H1 (cell line): ENCODE measurements at regions of chr17 and their contacts with region 1.

Region 1: GRCh38 chr17:76397687-76398487 is 13.5 kb downstream of the SPHK1 start:
- DNase-seq: peak; percentile 81 to 98
- H3K4me3 ChIP-seq: no peak overlapping the region
- H3K27ac ChIP-seq: 0 out of 2 replicates have a peak overlapping the region, but pooled peaks have one; percentile 17
- H3K4me1 ChIP-seq: no peaks in the 10 kb centered on the region
- H3K27me3 ChIP-seq: no peaks in the 10 kb centered on the region
- CTCF ChIP-seq: peak; percentile 94 to 100 (median 94)
- EP300 ChIP-seq: no peak
- POLR2A ChIP-seq: no peak
- RAD21 ChIP-seq: peak; percentile 88 to 90

Region 2: DNA sequence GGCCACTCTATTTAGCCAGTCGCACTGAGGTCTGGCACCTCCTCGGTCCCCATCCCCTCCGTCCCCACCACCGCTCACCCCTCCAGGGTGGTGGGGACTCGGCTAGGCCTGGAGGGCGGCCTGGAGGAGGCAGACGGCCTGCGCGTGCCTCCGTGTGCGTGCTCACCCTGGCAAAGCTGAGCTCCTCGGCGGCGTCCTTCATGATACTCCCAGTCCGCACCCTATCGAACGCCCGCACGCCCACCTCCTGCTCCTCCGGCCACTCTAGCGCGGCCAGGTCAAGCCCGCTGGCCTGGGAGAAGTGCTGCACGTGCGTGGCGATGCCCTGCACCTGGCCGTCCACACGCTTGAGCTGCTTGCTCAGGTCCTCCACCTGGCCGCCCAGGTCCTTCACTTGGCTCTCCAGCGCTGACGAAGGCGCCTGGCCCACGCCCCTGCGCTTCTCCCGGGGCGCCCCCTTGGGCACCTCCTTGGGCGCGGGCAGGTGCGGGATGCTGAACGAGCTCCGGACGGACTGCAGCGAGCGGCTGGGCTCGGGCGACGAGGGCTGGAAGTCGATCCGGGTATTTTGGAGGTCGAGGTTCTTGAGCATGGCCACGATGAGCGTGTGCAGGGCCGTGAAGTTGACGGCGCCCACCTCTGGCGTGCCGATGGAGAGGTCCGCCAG is 90.5 kb before region 1 on chr17:
- CTCF ChIA-PET with region 1: interaction called, 161 read pairs
- POLR2A ChIA-PET with region 1: interaction called, 3 read pairs
- DNase-seq: no peak
- H3K4me3 ChIP-seq: no peak overlapping the region
- H3K27ac ChIP-seq: no peak overlapping the region
- H3K4me1 ChIP-seq: no peaks in the 10 kb centered on the region
- H3K27me3 ChIP-seq: no peaks in the 10 kb centered on the region
- CTCF ChIP-seq: no peak
- EP300 ChIP-seq: no peak
- POLR2A ChIP-seq: no peak
- RAD21 ChIP-seq: no peak

Region 3: DNA sequence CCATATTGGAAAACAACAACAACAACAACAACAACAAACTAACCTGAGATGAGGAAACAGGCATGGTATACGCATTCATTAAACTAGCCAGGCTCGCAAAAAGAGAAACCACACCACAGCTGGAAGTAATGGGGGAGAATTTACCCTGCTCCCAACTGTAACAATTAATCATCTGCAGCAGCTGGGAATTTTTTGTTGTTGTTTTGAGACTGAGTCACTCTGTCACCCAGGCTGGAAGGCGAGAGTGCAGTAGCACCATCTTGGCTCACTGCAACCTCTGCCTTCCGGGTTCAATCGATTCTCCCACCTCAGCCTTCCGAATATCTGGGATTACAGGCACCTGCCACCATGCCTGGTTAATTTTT is 60.5 kb before region 1 on chr17:
- CTCF ChIA-PET with region 1: interaction called, 32 read pairs
- POLR2A ChIA-PET with region 1: no interaction called
- DNase-seq: no peak
- H3K4me3 ChIP-seq: no peak overlapping the region
- H3K27ac ChIP-seq: no peak overlapping the region
- H3K4me1 ChIP-seq: no peaks in the 10 kb centered on the region
- H3K27me3 ChIP-seq: no peaks in the 10 kb centered on the region
- CTCF ChIP-seq: no peak
- EP300 ChIP-seq: no peak
- POLR2A ChIP-seq: no peak
- RAD21 ChIP-seq: no peak

Region 4: DNA sequence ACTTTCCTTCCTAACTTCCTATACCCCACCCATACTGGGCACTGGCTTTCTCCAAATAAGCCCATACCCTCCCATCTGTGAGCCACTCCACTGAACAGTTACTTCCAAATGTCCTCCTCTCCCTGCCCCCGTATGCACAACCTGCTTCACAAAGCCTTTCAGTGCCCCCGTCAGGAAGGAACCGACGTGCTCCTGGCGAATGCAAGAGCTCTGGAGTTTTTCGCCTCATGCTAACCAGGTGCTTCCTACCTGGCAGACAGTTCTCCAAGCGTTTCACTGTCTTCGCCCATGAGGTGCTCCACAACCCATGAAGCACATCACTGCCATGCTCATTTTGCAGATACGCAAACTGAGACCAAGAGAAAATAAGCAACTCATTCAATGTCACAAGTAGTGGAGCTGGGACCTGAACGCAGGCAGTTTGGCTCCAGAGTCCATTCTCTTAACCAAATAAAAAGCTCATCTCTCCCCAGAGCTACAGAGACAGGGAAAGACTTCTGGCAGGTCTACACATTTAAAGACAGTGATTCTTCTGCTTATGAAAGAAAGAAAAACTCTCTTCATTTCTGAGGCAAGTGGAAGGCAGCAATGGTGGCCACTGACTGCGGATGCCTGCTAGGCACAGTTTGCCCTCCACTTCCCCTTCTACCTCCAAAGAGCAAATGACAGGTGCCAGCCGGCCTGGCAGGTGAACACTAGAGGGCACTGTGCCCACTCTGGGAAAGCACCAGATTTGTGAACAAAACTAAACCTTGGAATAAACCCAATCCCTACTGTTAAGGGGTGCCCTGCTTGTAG is 10.4 kb after region 1 on chr17:
- CTCF ChIA-PET with region 1: interaction called, 57 read pairs
- POLR2A ChIA-PET with region 1: interaction called, 3 read pairs
- DNase-seq: peak in 1 of 2 experiments; percentile 88
- H3K4me3 ChIP-seq: no peak overlapping the region
- H3K27ac ChIP-seq: no peak overlapping the region
- H3K4me1 ChIP-seq: no peaks in the 10 kb centered on the region; a peak in 2 of 7 replicates
- H3K27me3 ChIP-seq: no peaks in the 10 kb centered on the region
- CTCF ChIP-seq: peak; percentile 83 to 88 (median 87)
- EP300 ChIP-seq: no peak
- POLR2A ChIP-seq: no peak
- RAD21 ChIP-seq: peak; percentile 80 to 83

Region 5: DNA sequence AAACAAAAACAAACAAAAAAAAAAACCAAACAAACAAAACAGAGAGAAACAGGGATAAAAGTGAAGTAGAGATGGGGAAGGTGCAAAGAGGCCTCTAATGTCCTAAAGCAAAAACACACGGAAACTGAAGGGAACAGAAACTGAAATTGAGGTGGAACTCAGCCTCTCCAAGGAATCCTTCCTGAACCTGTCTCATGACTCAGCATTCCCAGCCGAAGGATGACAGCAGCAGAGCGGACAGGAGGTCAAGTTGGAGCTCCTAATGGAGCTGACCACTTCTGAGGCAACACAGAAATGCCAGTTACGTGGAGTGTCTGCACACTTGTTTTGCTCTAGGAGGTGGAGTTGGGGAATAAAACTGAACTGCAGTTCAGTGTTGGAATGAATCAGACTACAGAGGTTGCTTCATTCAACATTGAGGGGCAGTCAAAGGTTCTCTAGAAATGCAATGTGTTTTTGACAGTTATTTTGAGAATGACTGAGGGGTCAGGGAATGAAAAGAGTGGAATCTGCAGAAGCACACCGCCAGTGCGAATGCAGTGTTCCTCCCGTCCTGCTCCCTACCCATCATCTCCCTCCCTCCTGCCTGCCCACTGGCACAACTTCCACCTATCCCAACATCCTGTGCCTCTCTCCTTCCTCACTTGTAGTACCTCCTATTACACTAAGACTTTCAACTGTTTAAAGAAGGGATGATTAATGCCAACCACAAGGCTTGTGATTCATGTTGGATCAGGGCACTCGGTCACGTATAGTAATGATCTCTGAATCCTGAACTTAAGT is 48.8 kb after region 1 on chr17:
- CTCF ChIA-PET with region 1: interaction called, 10 read pairs
- POLR2A ChIA-PET with region 1: no interaction called
- DNase-seq: no peak
- H3K4me3 ChIP-seq: peak overlapping the region in 1 of 4 experiments; percentile 31; a peak in 3 of 8 replicates
- H3K27ac ChIP-seq: no peak overlapping the region
- H3K4me1 ChIP-seq: peaks cover 33 to 63% (median 58%) of the 10 kb centered on the region in 4 experiments
- H3K27me3 ChIP-seq: no peaks in the 10 kb centered on the region
- CTCF ChIP-seq: no peak
- EP300 ChIP-seq: no peak
- POLR2A ChIP-seq: no peak
- RAD21 ChIP-seq: no peak

Region 6: GRCh38 chr17:76506408-76507349 is 108.8 kb after region 1 on chr17:
- CTCF ChIA-PET with region 1: interaction called, 32 read pairs
- POLR2A ChIA-PET with region 1: no interaction called
- DNase-seq: peak; percentile 56 to 99
- H3K4me3 ChIP-seq: peak overlapping the region in 1 of 4 experiments; percentile 40; a peak in 2 of 8 replicates
- H3K27ac ChIP-seq: no peak overlapping the region
- H3K4me1 ChIP-seq: peaks cover 4 to 9% (median 6%) of the 10 kb centered on the region in 4 experiments
- H3K27me3 ChIP-seq: peaks cover 0 to 6% (median 4%) of the 10 kb centered on the region in 4 experiments; a peak in 5 of 7 replicates
- CTCF ChIP-seq: peak; percentile 92 to 98 (median 93)
- EP300 ChIP-seq: no peak
- POLR2A ChIP-seq: no peak
- RAD21 ChIP-seq: peak; percentile 96 to 97